ENCODE measurements at regions of chr12 and their contacts with region 1.

Region 1: DNA sequence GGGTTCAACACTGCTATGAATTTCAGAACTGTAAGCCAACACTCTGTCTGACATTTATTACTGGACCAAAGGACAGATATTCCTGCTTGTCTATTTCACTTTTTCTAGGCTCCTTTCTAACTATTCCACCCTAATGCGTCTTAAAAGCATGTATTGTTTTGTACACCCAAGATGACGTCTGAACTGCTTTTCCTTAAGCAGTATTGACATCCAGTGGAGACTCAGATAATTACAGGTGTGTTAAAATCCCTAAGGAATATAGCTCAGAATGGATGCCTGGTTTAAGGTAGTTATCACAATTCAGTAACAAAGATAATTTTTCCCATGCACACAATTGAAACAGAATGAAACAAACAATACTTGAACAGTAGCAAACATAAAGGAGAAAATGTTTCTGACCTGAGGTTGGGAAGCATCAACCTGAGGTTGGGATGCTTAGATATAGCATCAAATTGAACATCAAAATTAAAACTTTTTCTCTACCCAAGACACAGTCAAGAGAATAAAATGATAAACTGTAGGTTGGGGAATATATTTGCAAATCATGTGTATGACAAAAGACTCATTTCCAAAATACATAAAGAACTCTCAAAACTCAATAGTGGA is 93.7 kb upstream of the PTPRR start:
- DNase-seq: peak; percentile 2 to 37
- H3K4me3 ChIP-seq: peak overlapping the region; percentile 27; the same call in 1 of the 2 replicates
- H3K27ac ChIP-seq: no peak overlapping the region
- H3K4me1 ChIP-seq: 0 out of 2 replicates have a peak, but pooled peaks cover 5% of the 10 kb centered on the region
- H3K27me3 ChIP-seq: no peaks in the 10 kb centered on the region
- CTCF ChIP-seq: peak; percentile 79

Region 2: DNA sequence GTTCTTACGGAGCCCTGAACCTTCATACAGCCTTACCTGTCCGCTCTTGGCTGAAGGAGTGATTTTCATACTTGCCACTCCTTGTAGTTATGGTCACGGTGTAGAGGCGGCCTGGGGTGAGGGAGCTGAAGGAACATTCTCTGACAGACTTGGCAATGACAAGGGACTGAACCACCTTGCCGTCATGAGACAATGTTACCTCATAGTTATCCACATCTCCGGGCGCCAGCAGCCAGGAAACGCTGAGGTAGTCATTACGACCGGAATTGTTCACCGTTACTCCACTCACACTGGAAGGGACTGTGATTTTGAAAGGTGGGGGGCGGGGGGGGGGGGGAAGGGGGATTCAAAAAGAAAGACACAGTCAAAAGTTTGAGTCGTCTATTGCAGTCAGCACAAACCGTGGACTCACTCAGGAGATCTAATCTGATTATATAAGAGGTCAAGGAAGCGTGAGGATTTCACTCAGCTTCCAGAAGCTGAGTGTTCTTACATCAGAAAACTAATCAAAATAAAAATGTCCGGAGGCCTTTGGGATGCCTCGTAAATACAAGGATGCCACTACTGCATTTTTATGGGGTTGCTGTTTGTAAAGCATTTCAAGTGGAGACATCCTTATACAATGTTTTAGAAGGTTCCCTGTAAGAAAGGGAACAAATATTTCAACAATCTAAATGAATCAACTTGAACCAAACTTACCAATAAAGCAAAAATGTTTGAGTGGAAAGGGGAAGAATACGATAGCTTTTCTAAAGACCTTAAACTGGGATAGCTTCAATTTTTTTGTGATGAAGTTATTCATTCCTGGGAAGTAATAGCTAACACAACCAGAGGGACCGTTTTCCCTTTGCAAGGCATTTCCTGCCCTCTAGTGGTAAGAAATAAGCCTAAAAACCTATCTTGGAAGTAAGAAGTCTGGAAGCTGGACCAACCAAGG is 437.7 kb before region 1 on chr12:
- CTCF ChIA-PET with region 1: interaction called, 3 read pairs
- POLR2A ChIA-PET with region 1: no interaction called
- intact Hi-C with region 1: loop called (anchors 5 kb)
- DNase-seq: peak in 1 of 2 experiments; percentile 65
- H3K4me3 ChIP-seq: no peak overlapping the region
- H3K27ac ChIP-seq: no peak overlapping the region
- H3K4me1 ChIP-seq: no peaks in the 10 kb centered on the region
- H3K27me3 ChIP-seq: no peaks in the 10 kb centered on the region
- CTCF ChIP-seq: peak; percentile 86

Region 3: DNA sequence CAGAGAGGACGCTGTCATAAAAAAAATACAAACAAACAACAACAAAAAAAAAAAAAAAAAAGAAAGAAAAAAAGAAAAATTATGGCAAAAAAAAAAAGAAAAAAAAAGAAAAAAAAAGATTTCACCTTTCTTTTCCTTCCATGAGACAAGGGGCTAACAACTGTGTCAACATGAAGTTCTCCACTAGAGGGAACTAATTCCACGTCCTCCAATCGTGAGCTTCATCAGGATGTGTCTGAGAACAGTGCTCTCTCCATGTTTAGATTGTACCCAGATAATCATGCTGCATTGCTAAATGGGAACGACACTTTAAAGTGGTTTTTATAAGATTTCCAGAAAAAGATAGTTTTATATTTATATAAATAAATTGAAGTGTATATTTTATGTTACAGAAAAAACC is 280.9 kb before region 1 on chr12:
- CTCF ChIA-PET with region 1: interaction called, 3 read pairs
- POLR2A ChIA-PET with region 1: no interaction called
- intact Hi-C with region 1: loop called (anchors 1 kb)
- DNase-seq: peak; percentile 30 to 43
- H3K4me3 ChIP-seq: no peak overlapping the region
- H3K27ac ChIP-seq: no peak overlapping the region
- H3K4me1 ChIP-seq: no peaks in the 10 kb centered on the region
- H3K27me3 ChIP-seq: no peaks in the 10 kb centered on the region
- CTCF ChIP-seq: peak; percentile 85

Region 4: DNA sequence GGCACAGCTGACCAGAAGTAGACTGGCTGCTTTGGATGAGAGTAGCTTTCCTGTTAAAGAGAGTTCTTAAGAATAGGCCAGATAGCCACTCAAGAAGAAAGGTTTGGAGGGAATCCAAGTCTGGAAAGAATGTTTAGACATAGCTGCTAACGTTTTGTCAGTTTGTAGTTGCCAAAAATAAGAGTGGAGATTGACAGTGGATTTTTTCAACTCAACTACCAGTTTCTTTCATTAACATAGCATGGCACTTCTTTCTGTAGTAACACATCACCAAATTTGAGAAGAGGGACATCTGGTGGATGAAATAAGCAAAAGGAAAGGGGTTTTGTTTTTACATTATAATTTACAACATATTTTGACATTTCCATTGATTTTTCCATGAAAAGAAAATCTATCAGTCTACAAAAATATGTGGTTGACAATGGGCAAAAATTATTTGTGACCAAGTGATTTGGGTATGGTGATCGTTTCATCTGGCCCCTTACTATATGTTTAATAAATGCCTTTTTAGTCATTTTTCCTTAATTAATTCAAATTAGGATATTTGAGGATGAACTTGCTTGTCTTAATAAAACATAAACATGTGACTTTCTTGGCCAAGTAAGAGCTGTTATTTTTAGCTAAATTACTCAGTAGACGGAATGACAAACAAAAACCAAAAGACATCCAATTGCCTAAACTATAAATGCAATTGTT is 164.9 kb before region 1 on chr12:
- CTCF ChIA-PET with region 1: no interaction called
- POLR2A ChIA-PET with region 1: no interaction called
- intact Hi-C with region 1: loop called (anchors 5 kb)
- DNase-seq: peak in 1 of 2 experiments; percentile 37
- H3K4me3 ChIP-seq: no peak overlapping the region
- H3K27ac ChIP-seq: no peak overlapping the region
- H3K4me1 ChIP-seq: no peaks in the 10 kb centered on the region
- H3K27me3 ChIP-seq: no peaks in the 10 kb centered on the region
- CTCF ChIP-seq: peak; percentile 63

Measured in PC-9 (cell line).